ENCODE measurements at regions of chr17 and their contacts with region 1.

Region 1: GRCh38 chr17:67376737-67377487 is at the start of gene PITPNC1:
- DNase-seq: peak; percentile 93
- ATAC-seq: peak; percentile 79
- H3K4me3 Mint-ChIP-seq: peak within 1 kb of the TSS; percentile 89
- H3K27ac Mint-ChIP-seq: peak within 1 kb of the TSS; percentile 90
- H3K4me1 Mint-ChIP-seq: peaks cover 44% of the 10 kb centered on the region
- H3K27me3 Mint-ChIP-seq: no peaks in the 10 kb centered on the region
- total RNA-seq, gene PITPNC1: 74.0 to 76.5 TPM

Region 2: DNA sequence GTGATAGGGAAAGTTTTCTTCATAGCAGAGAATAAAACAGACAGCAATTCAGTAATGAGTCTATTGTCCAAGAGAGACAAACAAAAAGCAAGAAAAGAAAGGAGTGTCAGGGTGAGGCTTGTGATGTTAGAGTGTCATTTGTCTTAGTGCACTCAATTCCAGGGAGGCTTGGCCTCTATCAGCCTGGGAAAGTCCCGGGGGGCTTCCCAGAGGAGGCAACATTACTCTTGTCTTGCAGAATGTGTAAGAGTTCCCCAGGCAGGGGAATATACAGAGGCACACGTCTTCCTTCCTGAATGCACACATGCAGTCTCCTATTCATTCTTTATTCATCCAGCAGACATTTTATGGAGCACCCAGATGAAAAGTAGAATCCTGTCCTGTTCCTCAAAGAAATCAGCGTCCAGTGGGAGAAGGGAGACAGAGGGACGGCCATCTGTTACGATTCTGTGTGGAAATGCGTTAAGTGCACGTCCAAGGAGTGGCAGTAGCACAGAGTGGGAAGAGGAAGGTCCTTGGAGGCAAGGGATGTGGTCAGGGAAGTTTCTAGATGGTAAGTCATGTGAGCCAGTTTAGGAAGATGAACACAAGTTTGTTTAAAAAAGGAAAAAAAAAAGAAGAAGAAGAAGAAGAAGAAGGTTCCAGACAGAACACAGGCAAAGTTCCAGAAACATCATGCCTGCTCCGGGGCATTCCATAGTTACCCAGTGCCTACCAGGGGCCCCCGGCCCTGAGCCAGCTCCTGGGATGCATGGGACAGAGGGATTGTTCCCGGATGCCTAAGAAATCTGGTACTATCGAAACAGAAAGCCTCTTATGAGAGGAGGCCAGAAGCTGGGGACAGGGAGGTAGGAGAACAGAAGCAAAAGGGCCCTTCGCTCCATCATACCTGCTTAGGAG is 391.3 kb before region 1 on chr17:
- CTCF ChIA-PET with region 1: no interaction called
- POLR2A ChIA-PET with region 1: no interaction called
- DNase-seq: no peak
- ATAC-seq: no peak
- H3K4me3 Mint-ChIP-seq: no peak overlapping the region
- H3K27ac Mint-ChIP-seq: no peak overlapping the region
- H3K4me1 Mint-ChIP-seq: peaks cover 4% of the 10 kb centered on the region
- H3K27me3 Mint-ChIP-seq: peaks cover 40% of the 10 kb centered on the region

Region 3: DNA sequence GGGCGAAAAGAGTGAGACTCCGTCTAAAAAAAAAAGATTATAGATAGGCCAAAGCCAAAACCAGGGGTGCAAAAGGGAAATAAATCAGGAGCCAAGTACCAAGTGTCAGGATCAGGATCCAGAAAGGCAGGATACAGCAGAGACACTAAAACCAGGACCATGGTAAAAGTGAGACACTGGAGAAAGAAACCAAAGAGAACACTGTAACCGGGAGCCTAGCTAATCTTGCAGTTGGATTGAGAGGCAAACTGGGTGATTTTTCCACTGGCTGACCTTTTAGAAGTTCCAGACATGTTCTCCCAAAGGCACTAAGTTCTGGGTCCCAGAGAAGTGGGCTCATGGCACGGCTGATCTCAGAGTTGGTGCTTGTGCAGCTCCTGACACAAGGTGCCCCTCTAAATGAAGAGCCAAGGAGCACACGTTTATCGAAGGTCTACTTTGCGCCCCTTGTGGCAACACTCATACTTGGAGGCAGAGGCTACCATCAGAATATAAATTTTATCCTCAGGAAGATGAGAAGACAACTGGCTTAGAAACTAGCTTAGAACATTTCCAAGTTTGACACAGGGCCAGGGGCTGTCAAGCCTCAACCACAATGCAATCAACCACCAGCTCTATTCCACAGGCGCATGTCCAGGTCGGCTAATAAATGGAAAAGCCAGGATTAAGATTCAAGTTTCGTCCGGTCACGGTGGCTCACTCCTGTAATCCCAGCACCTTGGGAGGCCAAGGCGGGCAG is 104.4 kb before region 1 on chr17:
- CTCF ChIA-PET with region 1: no interaction called
- POLR2A ChIA-PET with region 1: no interaction called
- DNase-seq: peak; percentile 34
- ATAC-seq: peak; percentile 49
- H3K4me3 Mint-ChIP-seq: no peak overlapping the region
- H3K27ac Mint-ChIP-seq: no peak overlapping the region
- H3K4me1 Mint-ChIP-seq: no peaks in the 10 kb centered on the region
- H3K27me3 Mint-ChIP-seq: no peaks in the 10 kb centered on the region

Region 4: DNA sequence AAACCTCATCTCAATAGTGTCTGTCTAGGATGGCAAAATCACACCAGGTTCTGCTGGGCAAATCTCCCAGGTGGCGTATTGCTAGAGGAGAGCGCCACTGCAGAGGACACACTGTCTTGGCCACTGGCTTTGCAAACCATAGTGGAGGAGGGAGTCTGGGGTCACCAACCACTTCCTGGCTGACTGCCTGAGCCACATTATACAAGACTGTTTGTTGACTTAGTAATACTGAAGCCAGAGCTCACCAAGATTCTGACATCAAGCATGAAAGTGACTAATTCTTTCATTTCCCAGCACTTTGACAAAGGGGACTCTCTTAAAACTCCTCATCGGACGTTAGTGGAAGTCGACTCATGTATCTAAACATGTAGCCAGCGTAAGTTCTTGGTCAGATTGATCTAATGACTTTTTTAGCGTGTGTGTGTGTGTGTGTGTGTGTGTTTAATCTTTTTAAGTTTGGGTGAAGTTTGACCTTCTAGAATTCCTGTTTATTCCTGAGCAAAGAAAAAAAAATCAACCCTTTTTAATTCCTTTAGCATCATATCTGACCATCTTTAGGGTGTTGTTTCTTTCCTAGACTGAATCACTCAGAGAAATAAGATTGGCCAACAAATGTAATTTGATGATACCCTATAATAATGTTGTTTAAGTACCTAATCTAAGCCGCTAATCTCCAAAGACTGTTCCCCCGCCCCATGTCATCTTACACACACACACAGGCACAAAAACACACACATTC is 13.9 kb after region 1 on chr17:
- CTCF ChIA-PET with region 1: interaction called, 82 read pairs
- POLR2A ChIA-PET with region 1: interaction called, 28 read pairs
- DNase-seq: peak; percentile 82
- ATAC-seq: peak; percentile 91
- H3K4me3 Mint-ChIP-seq: peak overlapping the region; percentile 71
- H3K27ac Mint-ChIP-seq: peak overlapping the region; percentile 93
- H3K4me1 Mint-ChIP-seq: peaks cover 69% of the 10 kb centered on the region
- H3K27me3 Mint-ChIP-seq: no peaks in the 10 kb centered on the region

Region 5: DNA sequence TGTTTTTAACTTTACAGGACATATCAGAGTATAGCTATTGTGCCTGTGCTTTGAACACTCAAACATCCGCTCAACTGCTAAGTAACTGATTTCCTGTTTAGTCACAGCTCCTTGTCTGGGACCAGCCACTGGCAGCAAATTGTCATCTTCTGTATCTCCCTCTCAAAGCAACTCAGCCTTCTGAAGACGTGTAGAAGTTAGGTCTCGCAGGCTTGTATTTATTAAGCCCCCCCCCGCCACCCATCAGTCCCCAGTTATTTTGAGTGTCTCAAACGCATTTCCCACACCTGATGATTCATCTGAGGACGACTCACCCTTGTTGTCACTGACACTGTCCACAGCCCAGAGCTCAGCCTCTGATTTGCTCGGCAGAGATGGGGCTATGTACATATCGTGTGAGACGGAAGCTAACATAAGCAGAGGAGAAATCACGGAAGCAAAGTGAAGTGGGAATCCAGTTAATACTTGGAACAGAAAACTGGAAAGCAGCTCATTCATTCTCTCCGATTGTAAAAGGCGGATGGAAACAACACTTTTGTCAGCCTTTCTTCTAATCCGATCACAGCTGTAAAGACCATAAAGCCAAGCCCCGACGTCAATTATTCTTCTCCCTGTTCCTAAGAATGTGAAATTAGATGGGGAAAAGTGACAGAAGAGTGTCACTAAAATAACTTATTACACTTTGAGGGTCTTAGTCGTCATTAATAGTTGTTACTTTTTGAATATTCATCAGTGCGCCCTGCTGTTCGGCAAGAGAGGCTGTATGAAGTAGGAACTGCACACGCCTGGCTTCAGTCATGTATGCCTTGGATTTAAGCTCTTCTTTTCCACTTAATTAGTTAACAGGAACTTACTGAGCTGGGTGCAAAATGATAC is 64.4 kb after region 1 on chr17:
- CTCF ChIA-PET with region 1: interaction called, 37 read pairs
- POLR2A ChIA-PET with region 1: interaction called, 61 read pairs
- DNase-seq: peak; percentile 84
- ATAC-seq: peak; percentile 96
- H3K4me3 Mint-ChIP-seq: peak overlapping the region; percentile 67
- H3K27ac Mint-ChIP-seq: peak overlapping the region; percentile 94
- H3K4me1 Mint-ChIP-seq: peaks cover 71% of the 10 kb centered on the region
- H3K27me3 Mint-ChIP-seq: no peaks in the 10 kb centered on the region

Region 6: GRCh38 chr17:67469208-67469895 is 92.4 kb after region 1 on chr17:
- CTCF ChIA-PET with region 1: interaction called, 365 read pairs
- POLR2A ChIA-PET with region 1: interaction called, 135 read pairs
- DNase-seq: peak; percentile 55
- ATAC-seq: peak; percentile 70
- H3K4me3 Mint-ChIP-seq: peak overlapping the region; percentile 64
- H3K27ac Mint-ChIP-seq: peak overlapping the region; percentile 92
- H3K4me1 Mint-ChIP-seq: peaks cover 74% of the 10 kb centered on the region
- H3K27me3 Mint-ChIP-seq: no peaks in the 10 kb centered on the region

Region 7: GRCh38 chr17:67629971-67630320 is 253.0 kb after region 1 on chr17:
- CTCF ChIA-PET with region 1: interaction called, 43 read pairs
- POLR2A ChIA-PET with region 1: interaction called, 3 read pairs
- DNase-seq: peak; percentile 24
- ATAC-seq: no peak
- H3K4me3 Mint-ChIP-seq: no peak overlapping the region
- H3K27ac Mint-ChIP-seq: no peak overlapping the region
- H3K4me1 Mint-ChIP-seq: no peaks in the 10 kb centered on the region
- H3K27me3 Mint-ChIP-seq: no peaks in the 10 kb centered on the region

Region 8: DNA sequence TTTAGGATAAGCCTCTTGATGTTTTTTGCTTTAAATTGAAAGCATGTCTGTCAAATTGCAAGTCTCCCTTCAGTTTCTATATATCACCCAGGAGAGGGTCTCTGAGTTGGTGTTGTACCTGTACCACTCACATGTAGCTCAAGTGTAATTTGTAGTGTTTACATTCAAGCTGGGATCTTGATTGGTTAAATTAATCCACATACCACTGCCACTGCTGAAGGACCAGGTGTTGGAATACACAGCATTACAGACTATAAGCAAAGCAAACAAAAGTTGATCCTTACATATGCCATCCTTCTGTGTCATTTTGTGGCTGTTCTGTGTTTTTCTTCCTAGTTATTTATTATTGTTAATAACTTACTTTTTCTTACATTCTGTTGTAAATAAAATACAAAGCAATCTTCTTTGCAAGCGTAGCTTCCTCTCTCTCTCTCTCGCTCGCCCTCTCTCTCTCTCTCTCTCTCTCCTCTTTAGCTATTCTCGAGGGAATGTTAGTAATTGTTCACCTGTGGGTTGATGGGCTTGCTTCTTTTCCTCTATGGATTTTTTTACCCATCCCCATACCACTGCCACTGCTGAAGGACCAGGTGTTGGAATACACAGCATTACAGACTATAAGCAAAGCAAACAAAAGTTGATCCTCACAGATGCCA is 320.1 kb after region 1 on chr17:
- CTCF ChIA-PET with region 1: interaction called, 29 read pairs
- POLR2A ChIA-PET with region 1: no interaction called
- DNase-seq: no peak
- ATAC-seq: no peak
- H3K4me3 Mint-ChIP-seq: no peak overlapping the region
- H3K27ac Mint-ChIP-seq: no peak overlapping the region
- H3K4me1 Mint-ChIP-seq: no peaks in the 10 kb centered on the region
- H3K27me3 Mint-ChIP-seq: no peaks in the 10 kb centered on the region